ENCODE measurements at regions of chr11 and their contacts with region 1.

Region 1: DNA sequence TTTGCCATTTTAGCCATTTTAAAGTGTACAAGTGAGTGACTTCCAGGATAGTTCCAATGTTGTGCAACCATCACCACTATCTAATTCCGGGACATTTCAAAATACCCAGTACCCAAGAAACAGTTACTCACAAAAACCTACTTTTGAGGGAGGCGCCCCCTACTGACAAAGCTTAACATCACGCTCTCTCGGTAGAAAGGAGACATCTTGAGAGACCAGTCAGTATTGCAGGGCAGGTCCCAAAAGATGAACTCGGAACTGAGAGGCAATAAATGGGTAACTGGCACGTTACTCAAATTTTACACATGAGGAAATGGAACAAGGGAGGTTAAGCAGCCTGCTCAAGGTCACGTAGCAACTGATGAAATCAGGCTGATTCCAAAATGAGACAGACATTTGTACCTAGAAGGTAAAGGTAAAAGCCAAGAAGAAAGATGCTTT is 50.0 kb upstream of the POU2AF1 start:
- DNase-seq: peak; percentile 75
- H3K4me3 Mint-ChIP-seq: no peak overlapping the region
- H3K27ac Mint-ChIP-seq: no peak overlapping the region
- H3K4me1 Mint-ChIP-seq: no peaks in the 10 kb centered on the region
- H3K27me3 Mint-ChIP-seq: peaks cover 16% of the 10 kb centered on the region

Region 2: GRCh38 chr11:111378861-111379601 is 50.1 kb before region 1 on chr11 and contains the start of gene POU2AF1:
- CTCF ChIA-PET with region 1: interaction called, 17 read pairs
- DNase-seq: peak; percentile 89
- H3K4me3 Mint-ChIP-seq: peak within 1 kb of the TSS; percentile 79
- H3K27ac Mint-ChIP-seq: peak within 1 kb of the TSS; percentile 95
- H3K4me1 Mint-ChIP-seq: peaks cover 39% of the 10 kb centered on the region
- H3K27me3 Mint-ChIP-seq: peaks cover 7% of the 10 kb centered on the region

Region 3: GRCh38 chr11:111409915-111410314 is 19.2 kb before region 1 on chr11:
- CTCF ChIA-PET with region 1: interaction called, 17 read pairs
- DNase-seq: no peak
- H3K4me3 Mint-ChIP-seq: no peak overlapping the region
- H3K27ac Mint-ChIP-seq: no peak overlapping the region
- H3K4me1 Mint-ChIP-seq: peaks cover 13% of the 10 kb centered on the region
- H3K27me3 Mint-ChIP-seq: peaks cover 14% of the 10 kb centered on the region

Region 4: GRCh38 chr11:111441443-111441842 is 12.4 kb after region 1 on chr11:
- CTCF ChIA-PET with region 1: interaction called, 68 read pairs
- DNase-seq: no peak
- H3K4me3 Mint-ChIP-seq: no peak overlapping the region
- H3K27ac Mint-ChIP-seq: no peak overlapping the region
- H3K4me1 Mint-ChIP-seq: peaks cover 25% of the 10 kb centered on the region
- H3K27me3 Mint-ChIP-seq: no peaks in the 10 kb centered on the region

Region 5: GRCh38 chr11:111446404-111447111 is 17.5 kb after region 1 on chr11:
- CTCF ChIA-PET with region 1: interaction called, 68 read pairs
- DNase-seq: peak; percentile 88
- H3K4me3 Mint-ChIP-seq: no peak overlapping the region
- H3K27ac Mint-ChIP-seq: peak overlapping the region; percentile 76
- H3K4me1 Mint-ChIP-seq: peaks cover 18% of the 10 kb centered on the region
- H3K27me3 Mint-ChIP-seq: peaks cover 3% of the 10 kb centered on the region